Right lobe of liver (tissue), 6 donors: ENCODE measurements at regions of chr1 and their contacts with region 1.

Region 1: GRCh38 chr1:39102537-39103327 is 76.6 kb downstream of the NDUFS5 start:
- DNase-seq: no peak
- ATAC-seq: peak; percentile 41 to 61 (median 52)
- H3K4me3 ChIP-seq: no peak overlapping the region
- H3K27ac ChIP-seq: no peak overlapping the region
- H3K4me1 ChIP-seq: peaks cover 0 to 28% (median 7%) of the 10 kb centered on the region in 4 donors
- H3K27me3 ChIP-seq: no peaks in the 10 kb centered on the region
- CTCF ChIP-seq: peak; percentile 62 to 90 (median 68)
- POLR2A ChIP-seq: no peak

Region 2: GRCh38 chr1:39282537-39283216 is 179.9 kb after region 1 on chr1:
- intact Hi-C with region 1: no loop called
- DNase-seq: no peak
- ATAC-seq: peak in 2 of 4 donors; percentile 26 to 73
- H3K4me3 ChIP-seq: no peak overlapping the region
- H3K27ac ChIP-seq: no peak overlapping the region
- H3K4me1 ChIP-seq: peaks cover 0 to 5% (median 0%) of the 10 kb centered on the region in 4 donors
- H3K27me3 ChIP-seq: no peaks in the 10 kb centered on the region
- CTCF ChIP-seq: no peak
- POLR2A ChIP-seq: no peak

Region 3: DNA sequence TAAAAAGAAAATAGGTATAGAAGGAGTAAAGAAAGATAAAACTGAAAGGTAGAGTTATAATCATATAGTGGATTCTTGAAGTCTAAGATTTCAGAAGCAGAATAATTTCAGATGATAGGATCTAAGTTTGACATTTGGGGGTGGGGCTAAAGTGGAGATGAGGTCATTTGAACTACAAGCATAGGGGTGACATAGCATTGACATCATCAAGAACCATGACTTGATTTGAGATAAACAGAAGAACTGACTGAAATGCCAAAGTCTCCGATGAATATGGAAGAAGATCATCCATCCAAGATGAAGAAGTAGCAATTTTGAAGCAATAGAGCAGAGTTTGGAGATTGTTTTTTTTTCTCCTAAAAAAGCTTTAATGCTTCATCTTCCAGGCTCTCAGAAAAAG is 224.1 kb after region 1 on chr1:
- intact Hi-C with region 1: no loop called
- DNase-seq: no peak
- ATAC-seq: no peak
- H3K4me3 ChIP-seq: no peak overlapping the region
- H3K27ac ChIP-seq: no peak overlapping the region
- H3K4me1 ChIP-seq: no peaks in the 10 kb centered on the region
- H3K27me3 ChIP-seq: no peaks in the 10 kb centered on the region
- CTCF ChIP-seq: no peak
- POLR2A ChIP-seq: no peak

Region 4: GRCh38 chr1:39387452-39387851 is 284.7 kb after region 1 on chr1:
- intact Hi-C with region 1: loop called in 1 of 2 experiments (anchors 10 kb)
- DNase-seq: no peak
- ATAC-seq: peak; percentile 37 to 72 (median 66)
- H3K4me3 ChIP-seq: no peak overlapping the region
- H3K27ac ChIP-seq: peak overlapping the region in 2 of 3 donors; percentile 24 to 33
- H3K4me1 ChIP-seq: peaks cover 0 to 53% (median 19%) of the 10 kb centered on the region in 4 donors
- H3K27me3 ChIP-seq: no peaks in the 10 kb centered on the region
- CTCF ChIP-seq: peak in 3 of 4 donors; percentile 25 to 47 (median 35)
- POLR2A ChIP-seq: no peak